Ovary (tissue), 10 donors: ENCODE measurements at regions of chr11 and their contacts with region 1.

Region 1: DNA sequence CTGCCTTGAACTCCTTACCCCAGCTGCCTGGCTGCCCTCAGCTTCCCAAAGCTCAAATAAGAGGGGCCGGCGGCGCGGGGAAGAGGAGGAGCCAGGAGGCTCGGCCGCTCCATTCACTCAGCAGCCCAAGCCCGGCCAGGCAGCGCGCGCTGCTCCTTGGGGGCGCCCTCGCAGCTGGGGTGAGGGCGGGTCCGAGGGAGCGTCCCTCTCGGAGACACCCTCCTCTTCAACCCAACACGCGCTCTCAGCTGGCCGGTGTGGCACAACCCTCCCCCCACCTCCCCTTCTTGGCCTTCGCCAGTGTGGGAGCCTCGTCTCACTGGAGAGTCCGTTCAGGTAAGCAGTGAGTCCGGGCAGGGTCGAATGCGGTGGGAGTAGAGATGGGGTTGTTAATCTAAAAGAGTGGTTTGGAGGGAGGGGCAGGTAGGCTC is at the start of gene WT1:
- DNase-seq: peak; percentile 88 to 93 (median 89)
- H3K4me3 ChIP-seq: peak within 1 kb of the TSS; percentile 87
- H3K27ac ChIP-seq: peak within 1 kb of the TSS; percentile 89 to 94
- H3K4me1 ChIP-seq: peaks cover 10% of the 10 kb centered on the region
- H3K27me3 ChIP-seq: no peaks in the 10 kb centered on the region
- CTCF ChIP-seq: no peak
- EP300 ChIP-seq: no peak
- POLR2A ChIP-seq: peak; percentile 70
- total RNA-seq, gene WT1: 33.1 to 171 (median 77.2) TPM

Region 2: GRCh38 chr11:32333320-32333991 is 102.1 kb before region 1 on chr11:
- intact Hi-C with region 1: loop called in 1 of 4 experiments (anchors 10 kb)
- DNase-seq: peak; percentile 63 to 78 (median 73)
- H3K4me3 ChIP-seq: peak overlapping the region; percentile 28
- H3K27ac ChIP-seq: no peak overlapping the region
- H3K4me1 ChIP-seq: no peaks in the 10 kb centered on the region
- H3K27me3 ChIP-seq: no peaks in the 10 kb centered on the region
- CTCF ChIP-seq: no peak
- EP300 ChIP-seq: no peak
- POLR2A ChIP-seq: no peak

Region 3: DNA sequence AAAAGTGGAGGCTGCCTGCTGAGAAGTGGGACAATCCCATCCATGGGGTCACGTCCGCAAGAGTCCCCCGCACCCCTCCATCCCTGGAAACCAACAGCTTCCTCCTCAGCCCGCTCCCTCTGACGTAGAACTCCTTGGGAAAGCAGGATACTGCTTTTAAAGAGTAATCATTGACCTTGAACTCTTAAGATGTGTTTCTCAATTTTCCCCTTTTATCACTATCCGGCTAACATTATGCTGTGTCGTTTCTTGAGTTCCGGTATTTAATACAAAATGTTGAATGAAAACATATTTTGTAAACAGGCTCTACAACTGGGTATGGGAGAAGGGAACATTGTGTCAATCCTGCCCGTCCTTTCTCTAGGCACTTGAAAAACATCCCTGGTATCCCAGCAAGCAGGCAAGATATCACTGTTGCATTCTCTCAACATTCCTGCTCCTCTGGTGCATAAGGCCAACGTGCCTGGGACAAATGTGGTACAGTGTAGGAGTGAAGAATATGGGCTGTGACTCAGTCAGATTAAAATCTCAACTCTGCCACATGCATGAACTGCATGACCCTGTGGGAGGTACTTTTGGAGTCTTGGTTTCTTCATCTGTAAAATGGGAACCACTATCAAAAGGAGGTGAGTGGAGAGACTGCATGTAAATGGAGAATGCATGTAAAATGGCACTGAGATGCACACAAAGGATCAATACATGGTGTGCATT is 53.0 kb before region 1 on chr11:
- intact Hi-C with region 1: loop called in 2 of 4 experiments (anchors 2 kb)
- DNase-seq: peak; percentile 70 to 80 (median 76)
- H3K4me3 ChIP-seq: no peak overlapping the region
- H3K27ac ChIP-seq: peak overlapping the region in 1 of 2 donors; percentile 42
- H3K4me1 ChIP-seq: peaks cover 6% of the 10 kb centered on the region
- H3K27me3 ChIP-seq: no peaks in the 10 kb centered on the region
- CTCF ChIP-seq: no peak
- EP300 ChIP-seq: no peak
- POLR2A ChIP-seq: no peak

Region 4: DNA sequence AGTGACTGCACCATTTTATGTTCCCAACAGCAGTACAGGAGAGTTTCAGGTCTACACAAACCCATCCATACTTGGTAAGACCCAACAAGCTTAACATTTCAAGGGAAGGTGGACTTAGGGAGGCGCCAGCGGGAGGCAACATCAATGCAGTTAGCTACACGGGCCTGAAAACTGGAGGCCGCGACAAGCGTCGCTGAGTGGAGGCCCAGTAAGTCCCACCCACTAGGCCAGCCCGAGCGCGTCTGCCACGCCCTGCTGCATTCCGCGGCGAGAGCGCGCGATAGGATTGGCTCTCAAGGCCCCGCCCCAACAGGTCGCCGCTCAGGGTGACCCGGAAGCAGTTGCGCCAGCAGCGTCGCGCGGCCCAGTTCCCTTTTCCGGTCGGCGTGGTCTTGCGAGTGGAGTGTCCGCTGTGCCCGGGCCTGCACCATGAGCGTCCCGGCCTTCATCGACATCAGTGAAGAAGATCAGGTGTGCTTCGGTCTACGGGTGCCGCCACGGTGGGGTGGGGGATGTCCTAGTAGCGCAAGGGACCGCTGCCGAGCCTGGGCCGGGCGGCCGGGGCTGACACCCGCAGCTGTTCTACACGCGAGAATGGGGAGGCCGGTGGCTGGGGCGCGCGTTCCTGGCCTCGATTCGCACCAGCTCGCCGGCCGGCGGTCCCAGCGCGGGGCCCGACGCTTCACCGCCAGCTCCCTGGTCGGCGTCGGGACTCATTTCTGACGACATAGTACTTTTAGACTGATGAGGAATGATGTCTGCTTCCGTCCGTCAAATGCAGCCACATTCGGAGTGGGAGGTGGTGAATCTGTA is 148.1 kb after region 1 on chr11 and contains the start of gene EIF3M:
- intact Hi-C with region 1: loop called (anchors 10 kb)
- DNase-seq: peak; percentile 96 to 98 (median 96)
- H3K4me3 ChIP-seq: peak within 1 kb of the TSS; percentile 73
- H3K27ac ChIP-seq: peak within 1 kb of the TSS in 1 of 2 donors; percentile 79
- H3K4me1 ChIP-seq: no peaks in the 10 kb centered on the region
- H3K27me3 ChIP-seq: no peaks in the 10 kb centered on the region
- CTCF ChIP-seq: no peak
- EP300 ChIP-seq: no peak
- POLR2A ChIP-seq: peak; percentile 77
- total RNA-seq, gene EIF3M: 273 to 571 (median 337) TPM

Region 5: GRCh38 chr11:32615422-32615821 is 179.9 kb after region 1 on chr11:
- intact Hi-C with region 1: loop called in 3 of 4 experiments (anchors 5 to 10 kb)
- DNase-seq: peak in 1 of 5 donors; percentile 28
- H3K4me3 ChIP-seq: no peak overlapping the region
- H3K27ac ChIP-seq: no peak overlapping the region
- H3K4me1 ChIP-seq: no peaks in the 10 kb centered on the region
- H3K27me3 ChIP-seq: no peaks in the 10 kb centered on the region
- CTCF ChIP-seq: peak in 2 of 3 donors; percentile 49 to 62
- EP300 ChIP-seq: no peak
- POLR2A ChIP-seq: no peak

Region 6: GRCh38 chr11:32940865-32941264 is 505.3 kb after region 1 on chr11:
- intact Hi-C with region 1: no loop called
- DNase-seq: no peak
- H3K4me3 ChIP-seq: no peak overlapping the region
- H3K27ac ChIP-seq: no peak overlapping the region
- H3K4me1 ChIP-seq: peaks cover 3% of the 10 kb centered on the region
- H3K27me3 ChIP-seq: no peaks in the 10 kb centered on the region
- CTCF ChIP-seq: no peak
- EP300 ChIP-seq: no peak
- POLR2A ChIP-seq: no peak